Calu3 (cell line): ENCODE measurements at regions of chr7 and their contacts with region 1.

Region 1: DNA sequence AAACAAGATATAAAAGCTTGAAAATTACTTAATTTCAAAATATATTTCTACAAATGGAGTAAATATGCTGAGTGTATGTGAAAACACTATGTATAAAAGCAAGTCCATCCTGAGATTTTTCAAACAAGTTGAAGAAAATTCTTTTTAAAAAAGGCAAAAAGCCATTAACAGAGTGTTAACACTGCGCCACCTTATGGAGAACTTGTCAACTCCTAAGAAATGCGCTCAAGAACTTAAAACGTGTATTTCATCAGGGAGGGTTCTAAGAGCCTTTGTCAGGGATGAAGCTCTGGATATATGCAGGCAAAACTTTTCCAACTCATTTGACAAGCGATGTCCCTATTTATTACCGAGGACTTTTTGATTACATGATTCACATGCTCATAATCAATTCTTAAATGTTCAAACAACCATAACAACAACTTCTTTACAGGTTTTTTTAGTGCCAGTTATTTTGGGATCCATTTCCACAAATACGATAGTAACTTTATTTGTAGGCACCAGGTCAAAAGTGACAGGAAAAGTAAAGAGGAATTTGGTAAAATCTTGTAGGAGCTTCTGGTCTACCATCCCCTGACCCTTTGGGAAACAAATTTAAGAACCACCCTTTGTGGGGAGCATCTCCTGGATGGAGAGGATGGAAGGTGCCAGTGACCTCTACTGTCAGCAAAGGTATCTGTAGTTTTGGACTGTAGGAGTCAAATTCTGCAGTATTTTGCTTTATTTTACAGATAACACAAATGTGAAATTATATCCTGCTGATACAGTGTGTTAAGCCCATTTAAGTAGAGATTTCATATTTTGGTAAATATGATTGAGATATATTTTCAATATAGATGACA is 23.2 kb downstream of the CALCR start:
- DNase-seq: peak; percentile 21
- H3K4me3 Mint-ChIP-seq: no peak overlapping the region
- H3K27ac Mint-ChIP-seq: no peak overlapping the region
- H3K4me1 Mint-ChIP-seq: no peaks in the 10 kb centered on the region
- H3K27me3 Mint-ChIP-seq: peaks cover 12% of the 10 kb centered on the region
- CTCF ChIP-seq: peak; percentile 38

Region 2: GRCh38 chr7:93442478-93443224 is 108.6 kb before region 1 on chr7:
- CTCF ChIA-PET with region 1: interaction called, 6 read pairs
- intact Hi-C with region 1: loop called (anchors 1 kb)
- DNase-seq: peak; percentile 70
- H3K4me3 Mint-ChIP-seq: no peak overlapping the region
- H3K27ac Mint-ChIP-seq: no peak overlapping the region
- H3K4me1 Mint-ChIP-seq: no peaks in the 10 kb centered on the region
- H3K27me3 Mint-ChIP-seq: peaks cover 65% of the 10 kb centered on the region
- CTCF ChIP-seq: peak; percentile 81

Region 3: DNA sequence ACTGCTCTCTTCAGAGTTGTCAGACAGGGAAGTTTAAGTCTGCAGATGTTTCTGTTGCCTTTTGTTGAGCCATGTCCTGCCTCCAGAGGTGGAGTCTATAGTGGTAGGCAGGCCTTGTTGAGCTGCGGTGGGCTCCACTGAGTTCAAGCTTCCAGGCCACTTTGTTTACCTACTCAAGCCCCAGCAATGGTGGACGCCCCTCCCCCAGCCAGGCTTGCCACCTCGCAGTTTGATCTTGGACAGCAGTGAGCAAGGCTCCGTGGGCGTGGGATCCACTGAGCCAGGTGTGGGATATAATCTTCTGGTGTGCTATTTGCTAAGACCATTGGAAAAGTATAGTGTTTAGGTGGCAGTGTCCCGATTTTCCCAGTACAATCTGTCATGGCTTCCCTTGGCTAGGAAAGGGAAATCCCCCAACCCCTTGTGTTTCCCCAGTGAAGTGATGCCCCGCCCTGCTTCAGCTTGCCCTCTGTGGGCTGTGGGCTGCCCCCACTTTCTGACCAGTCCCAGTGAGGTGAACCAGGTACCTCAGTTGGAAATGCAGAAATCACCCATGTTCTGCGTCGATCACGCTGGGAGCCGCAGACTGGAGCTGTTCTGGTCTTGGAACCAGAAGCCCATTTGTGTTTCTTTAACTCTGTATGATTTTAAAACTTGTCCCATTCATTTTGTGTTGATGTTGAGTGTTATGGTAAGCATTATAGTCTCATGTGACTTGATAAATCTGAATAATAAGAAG is 112.4 kb after region 1 on chr7:
- CTCF ChIA-PET with region 1: no interaction called
- intact Hi-C with region 1: no loop called
- DNase-seq: no peak
- H3K4me3 Mint-ChIP-seq: no peak overlapping the region
- H3K27ac Mint-ChIP-seq: no peak overlapping the region
- H3K4me1 Mint-ChIP-seq: no peaks in the 10 kb centered on the region
- H3K27me3 Mint-ChIP-seq: peaks cover 31% of the 10 kb centered on the region
- CTCF ChIP-seq: no peak

Region 4: DNA sequence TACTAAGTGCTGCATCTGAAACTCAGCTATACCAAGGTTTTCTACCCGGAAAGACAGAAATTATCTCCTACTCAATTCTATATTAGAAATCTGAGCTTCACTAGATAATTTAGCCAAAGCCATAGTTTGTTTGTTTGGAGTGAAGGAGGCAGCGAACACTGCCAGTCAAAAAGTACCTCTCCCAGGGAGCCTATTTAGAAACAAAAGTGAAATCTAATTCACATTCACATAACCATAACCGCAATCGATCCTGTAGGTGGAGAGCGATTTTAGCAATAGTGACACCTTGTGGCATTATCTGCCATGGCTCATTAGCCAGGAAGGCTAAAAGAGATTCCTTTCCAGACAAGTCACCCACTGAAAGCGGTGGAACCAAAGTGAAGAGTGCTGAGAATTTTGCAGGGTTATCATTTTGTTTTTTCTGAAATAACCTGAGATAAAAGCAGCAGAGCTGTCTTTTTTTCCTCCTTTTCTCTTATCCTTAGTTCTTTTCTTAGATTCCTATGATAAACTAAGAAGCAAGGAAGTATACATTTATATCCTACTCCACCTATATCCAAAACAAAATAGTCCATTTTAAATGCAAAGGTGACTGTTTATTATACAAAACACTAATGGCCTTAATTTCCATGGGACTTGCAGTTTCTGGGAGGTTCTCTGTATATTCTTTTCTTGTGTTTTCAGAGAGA is 536.5 kb after region 1 on chr7:
- CTCF ChIA-PET with region 1: no interaction called
- intact Hi-C with region 1: no loop called
- DNase-seq: peak; percentile 52
- H3K4me3 Mint-ChIP-seq: peak overlapping the region; percentile 24
- H3K27ac Mint-ChIP-seq: peak overlapping the region; percentile 28
- H3K4me1 Mint-ChIP-seq: peaks cover 14% of the 10 kb centered on the region
- H3K27me3 Mint-ChIP-seq: no peaks in the 10 kb centered on the region
- CTCF ChIP-seq: peak; percentile 46